ENCODE measurements at regions of chr15 and their contacts with region 1.

Region 1: GRCh38 chr15:85456798-85457197 is 76.4 kb downstream of the AKAP13 start:
- DNase-seq: no peak
- ATAC-seq: no peak
- H3K4me3 ChIP-seq: no peak overlapping the region
- H3K27ac ChIP-seq: no peak overlapping the region
- H3K4me1 ChIP-seq: peaks cover 0 to 89% (median 42%) of the 10 kb centered on the region in 12 donors
- H3K27me3 ChIP-seq: no peaks in the 10 kb centered on the region
- CTCF ChIP-seq: no peak
- POLR2A ChIP-seq: no peak

Region 2: DNA sequence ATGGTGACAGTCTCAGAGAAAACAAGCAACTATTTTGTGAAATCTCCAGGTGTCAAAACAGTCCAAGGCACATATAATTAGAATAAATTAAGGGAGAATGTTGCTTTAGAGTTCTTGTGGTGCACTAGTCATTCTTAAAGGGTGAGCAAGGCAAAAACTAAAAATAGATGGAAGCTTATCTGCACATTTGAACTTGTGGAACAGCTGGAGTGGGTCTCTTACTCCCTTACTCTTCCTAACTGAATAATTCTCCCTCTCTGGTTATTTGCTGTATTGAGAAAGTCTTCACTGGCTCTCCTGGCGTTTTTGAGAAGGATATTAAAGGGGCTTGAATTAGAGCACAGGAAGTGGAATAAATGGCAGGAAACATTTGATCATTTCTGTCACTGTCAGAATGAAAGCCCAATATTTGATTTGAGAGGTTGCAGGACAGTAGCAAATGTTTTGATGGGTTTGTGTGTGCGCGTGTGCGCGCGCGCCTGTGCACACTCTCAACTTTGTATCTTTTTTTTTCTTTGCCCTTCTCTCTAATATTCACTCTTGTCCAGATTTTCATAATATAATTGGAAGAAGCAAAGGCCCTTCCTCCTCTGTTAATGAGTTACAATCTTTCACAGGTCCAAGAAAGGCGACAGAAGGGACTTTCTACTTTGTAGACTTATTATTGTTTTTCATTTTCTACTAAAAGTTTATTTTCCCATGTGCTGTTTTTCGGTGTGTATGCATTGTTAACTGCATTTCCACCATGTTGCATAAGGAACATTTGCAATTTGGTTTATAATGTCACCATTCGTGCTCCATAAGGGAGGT is 35.5 kb before region 1 on chr15:
- intact Hi-C with region 1: loop called in 1 of 10 experiments (anchors 5 kb)
- DNase-seq: no peak
- ATAC-seq: peak in 3 of 4 donors; percentile 64 to 72 (median 71)
- H3K4me3 ChIP-seq: peak overlapping the region in 1 of 12 donors; percentile 2
- H3K27ac ChIP-seq: peak overlapping the region in 11 of 12 donors; percentile 1 to 63 (median 25)
- H3K4me1 ChIP-seq: peaks cover 5 to 88% (median 54%) of the 10 kb centered on the region in 12 donors
- H3K27me3 ChIP-seq: no peaks in the 10 kb centered on the region
- CTCF ChIP-seq: no peak
- POLR2A ChIP-seq: no peak